Panc1 (cell line): ENCODE measurements at regions of chr10 and their contacts with region 1.

Region 1: DNA sequence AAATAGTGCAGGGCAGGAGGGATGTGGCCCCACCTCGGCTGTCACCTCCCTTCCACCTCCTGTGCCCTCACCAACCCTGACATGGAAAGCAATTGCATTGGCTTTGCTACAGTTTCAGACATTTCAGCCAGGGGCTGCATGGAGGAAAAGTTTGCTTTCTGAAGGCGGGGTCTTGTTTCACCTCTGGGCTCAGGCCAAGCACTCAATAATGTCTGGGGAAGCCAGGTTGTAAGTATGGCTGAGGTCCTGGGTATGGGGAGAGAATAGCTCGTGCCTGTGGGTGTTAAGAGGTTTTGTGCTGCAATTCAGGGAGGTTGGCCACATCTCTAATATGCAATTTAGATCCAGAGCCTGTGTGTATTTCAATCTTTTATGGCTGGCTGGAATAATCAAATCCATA is 238.4 kb upstream of the MKI67 start:
- DNase-seq: no peak
- ATAC-seq: no peak
- H3K4me3 ChIP-seq: no peak overlapping the region
- H3K27ac ChIP-seq: no peak overlapping the region
- H3K4me1 ChIP-seq: no peaks in the 10 kb centered on the region
- H3K27me3 ChIP-seq: 0 out of 2 replicates have a peak, but pooled peaks cover 2% of the 10 kb centered on the region
- CTCF ChIP-seq: no peak

Region 2: GRCh38 chr10:128324077-128324827 is 40.4 kb before region 1 on chr10:
- CTCF ChIA-PET with region 1: no interaction called
- POLR2A ChIA-PET with region 1: no interaction called
- in situ Hi-C with region 1: no loop called
- intact Hi-C with region 1: no loop called
- DNase-seq: no peak
- ATAC-seq: peak; percentile 92
- H3K4me3 ChIP-seq: no peak overlapping the region
- H3K27ac ChIP-seq: no peak overlapping the region
- H3K4me1 ChIP-seq: no peaks in the 10 kb centered on the region
- H3K27me3 ChIP-seq: peaks cover 3% of the 10 kb centered on the region; the same call in 1 of the 2 replicates
- CTCF ChIP-seq: peak; percentile 63

Region 3: GRCh38 chr10:128345353-128345752 is 19.3 kb before region 1 on chr10:
- CTCF ChIA-PET with region 1: no interaction called
- POLR2A ChIA-PET with region 1: interaction called, 19 read pairs
- in situ Hi-C with region 1: no loop called
- intact Hi-C with region 1: no loop called
- DNase-seq: no peak
- ATAC-seq: no peak
- H3K4me3 ChIP-seq: no peak overlapping the region
- H3K27ac ChIP-seq: no peak overlapping the region
- H3K4me1 ChIP-seq: no peaks in the 10 kb centered on the region
- H3K27me3 ChIP-seq: no peaks in the 10 kb centered on the region
- CTCF ChIP-seq: no peak